Calu3 (cell line): ENCODE measurements at regions of chr11 and their contacts with region 1.

Region 1: DNA sequence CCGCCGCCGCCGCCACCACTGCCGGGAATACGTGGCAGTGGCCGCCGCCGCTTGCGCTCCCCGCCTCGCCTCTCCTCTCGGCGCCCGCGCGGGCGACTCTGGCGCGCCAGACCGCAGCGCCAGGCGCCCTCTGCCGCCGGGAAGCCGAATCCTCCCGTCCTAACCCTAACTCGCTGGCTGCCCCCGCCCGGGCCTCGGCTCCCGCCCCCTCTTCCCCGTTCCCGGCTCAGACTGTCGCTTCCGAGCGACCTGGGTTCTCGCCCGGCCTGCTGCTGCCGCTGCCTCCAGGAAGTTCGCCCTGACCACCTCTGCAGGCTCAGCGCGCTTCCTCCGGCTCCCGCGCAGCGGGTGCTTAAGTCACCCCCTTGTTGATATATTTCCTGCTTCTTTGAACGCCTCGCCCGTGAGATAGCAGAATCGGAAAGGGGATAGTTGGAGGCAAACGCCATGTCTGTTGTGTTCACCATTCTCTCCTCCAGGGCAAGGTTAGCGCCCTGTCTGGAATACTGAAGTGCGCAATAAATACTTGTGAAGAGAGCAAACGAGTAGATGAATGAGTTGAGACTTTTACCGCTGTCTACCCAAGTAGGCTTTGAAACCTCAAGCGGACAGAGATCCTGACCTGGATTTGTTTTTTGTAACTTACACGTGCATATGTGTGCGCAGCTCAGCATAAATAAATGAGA is at the start of gene SMCO4:
- DNase-seq: peak; percentile 87
- H3K4me3 Mint-ChIP-seq: peak within 1 kb of the TSS; percentile 93
- H3K27ac Mint-ChIP-seq: peak within 1 kb of the TSS; percentile 56
- H3K4me1 Mint-ChIP-seq: peaks cover 25% of the 10 kb centered on the region
- H3K27me3 Mint-ChIP-seq: no peaks in the 10 kb centered on the region
- CTCF ChIP-seq: peak; percentile 52
- total RNA-seq, gene SMCO4: 16.4 and 22.9 TPM in 2 replicates

Region 2: DNA sequence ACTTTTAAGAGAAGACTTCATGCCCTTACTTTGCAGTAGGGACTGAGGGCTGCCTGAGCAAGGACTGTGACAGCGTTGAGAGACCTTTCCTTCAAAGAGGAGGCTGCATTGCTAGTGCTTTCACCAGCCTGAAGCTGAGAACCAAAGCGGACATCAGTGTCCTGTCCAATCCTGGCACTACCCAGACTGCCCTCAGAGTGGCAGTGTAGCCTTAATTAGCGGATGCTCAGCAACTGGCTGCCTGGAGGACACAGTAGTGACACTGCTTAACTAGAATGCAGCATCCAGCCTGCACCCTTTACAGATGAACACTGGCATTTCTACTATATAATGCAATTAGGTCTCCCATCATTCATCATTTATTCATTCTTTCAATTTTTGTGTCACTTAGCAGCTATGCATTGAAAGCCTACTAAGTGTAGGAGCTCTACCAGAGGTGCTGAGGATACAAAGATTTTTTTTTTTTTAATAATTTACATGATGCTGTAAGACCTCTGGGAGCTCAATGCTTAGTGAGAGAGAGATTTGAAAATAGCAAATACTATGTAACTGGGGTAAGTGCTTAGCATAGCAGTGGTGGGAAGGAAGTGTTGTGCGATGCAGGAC is 308.7 kb before region 1 on chr11:
- CTCF ChIA-PET with region 1: no interaction called
- intact Hi-C with region 1: loop called (anchors 2 kb)
- DNase-seq: peak; percentile 66
- H3K4me3 Mint-ChIP-seq: no peak overlapping the region
- H3K27ac Mint-ChIP-seq: no peak overlapping the region
- H3K4me1 Mint-ChIP-seq: peaks cover 8% of the 10 kb centered on the region
- H3K27me3 Mint-ChIP-seq: peaks cover 53% of the 10 kb centered on the region
- CTCF ChIP-seq: peak; percentile 49

Region 3: GRCh38 chr11:93476796-93477195 is 66.6 kb before region 1 on chr11:
- CTCF ChIA-PET with region 1: no interaction called
- intact Hi-C with region 1: no loop called
- DNase-seq: peak; percentile 5
- H3K4me3 Mint-ChIP-seq: no peak overlapping the region
- H3K27ac Mint-ChIP-seq: no peak overlapping the region
- H3K4me1 Mint-ChIP-seq: no peaks in the 10 kb centered on the region
- H3K27me3 Mint-ChIP-seq: no peaks in the 10 kb centered on the region
- CTCF ChIP-seq: no peak

Region 4: DNA sequence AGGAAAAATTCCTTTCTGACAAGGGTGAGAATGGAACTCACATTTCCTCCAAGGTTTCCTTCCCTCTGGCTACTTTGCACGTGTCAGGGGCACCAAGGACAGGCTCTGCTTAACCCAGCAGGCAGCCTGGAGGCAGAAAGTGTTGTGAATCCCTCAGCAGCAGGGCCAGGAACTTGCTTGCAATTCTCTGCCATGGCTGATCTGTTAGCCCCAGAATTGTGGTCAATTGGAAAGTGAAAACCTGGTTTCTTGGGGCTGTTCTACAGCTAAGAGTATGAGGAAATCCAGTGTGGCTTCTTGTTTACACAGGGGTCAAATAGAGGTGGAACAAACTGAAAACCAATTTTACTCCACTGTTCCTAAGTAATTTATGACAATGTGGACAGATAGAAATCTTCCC is 79.7 kb after region 1 on chr11:
- CTCF ChIA-PET with region 1: no interaction called
- intact Hi-C with region 1: loop called (anchors 5 kb)
- DNase-seq: peak; percentile 15
- H3K4me3 Mint-ChIP-seq: no peak overlapping the region
- H3K27ac Mint-ChIP-seq: no peak overlapping the region
- H3K4me1 Mint-ChIP-seq: peaks cover 18% of the 10 kb centered on the region
- H3K27me3 Mint-ChIP-seq: no peaks in the 10 kb centered on the region
- CTCF ChIP-seq: no peak

Region 5: GRCh38 chr11:93652161-93652597 is 108.7 kb after region 1 on chr11:
- CTCF ChIA-PET with region 1: interaction called, 3 read pairs
- intact Hi-C with region 1: loop called (anchors 2 kb)
- DNase-seq: peak; percentile 52
- H3K4me3 Mint-ChIP-seq: no peak overlapping the region
- H3K27ac Mint-ChIP-seq: no peak overlapping the region
- H3K4me1 Mint-ChIP-seq: no peaks in the 10 kb centered on the region
- H3K27me3 Mint-ChIP-seq: peaks cover 49% of the 10 kb centered on the region
- CTCF ChIP-seq: peak; percentile 24